ENCODE measurements at regions of chr11 and their contacts with region 1.

Region 1: DNA sequence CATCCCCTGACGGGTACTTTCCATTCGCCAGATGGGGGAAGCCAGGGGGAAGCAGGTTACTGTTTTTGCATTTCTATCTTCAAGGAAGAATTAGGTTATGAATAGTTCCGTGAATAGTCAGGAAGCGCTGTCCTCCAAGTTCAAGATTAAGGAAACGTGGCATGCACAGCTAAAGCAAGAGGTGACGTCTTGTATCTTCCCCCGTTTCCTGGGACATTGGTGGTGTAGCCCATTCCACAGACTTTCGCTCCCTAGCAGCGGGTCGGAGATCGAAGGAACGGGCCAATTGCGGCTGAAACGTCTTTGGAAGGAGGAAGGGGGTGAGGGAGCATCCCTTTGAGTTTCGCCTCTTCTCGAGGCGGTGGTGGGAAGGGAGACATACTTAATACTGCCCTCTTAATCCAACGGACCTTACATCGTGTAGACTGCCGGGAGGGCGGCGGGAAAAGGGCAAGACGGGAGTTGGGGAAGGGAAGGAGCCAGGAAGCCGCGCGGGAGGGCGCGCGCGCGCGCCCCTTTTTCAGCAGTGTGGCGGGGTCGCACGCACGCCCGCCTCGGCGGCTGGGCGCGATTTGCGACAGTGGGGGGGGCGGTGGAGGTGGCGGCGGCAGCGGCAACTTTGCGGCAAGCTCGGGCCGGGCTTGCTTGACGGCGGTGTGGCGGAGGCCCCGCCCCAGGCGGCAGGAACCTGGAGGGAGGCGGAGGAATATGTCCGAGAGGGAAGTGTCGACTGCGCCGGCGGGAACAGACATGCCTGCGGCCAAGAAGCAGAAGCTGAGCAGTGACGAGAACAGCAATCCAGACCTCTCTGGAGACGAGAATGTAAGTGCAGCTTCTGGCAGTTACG is at the start of gene EED:
- DNase-seq: peak; percentile 88 to 97 (median 94)
- ATAC-seq: peak; percentile 85
- H3K4me3 ChIP-seq: peak within 1 kb of the TSS; percentile 100
- H3K4me3 Mint-ChIP-seq: no peak within 1 kb of the TSS
- H3K27ac ChIP-seq: peak within 1 kb of the TSS; percentile 97 to 99
- H3K27ac Mint-ChIP-seq: no peak within 1 kb of the TSS
- H3K4me1 ChIP-seq: peaks cover 25% of the 10 kb centered on the region
- H3K4me1 Mint-ChIP-seq: peaks cover 27% of the 10 kb centered on the region
- H3K27me3 ChIP-seq: no peaks in the 10 kb centered on the region
- H3K27me3 Mint-ChIP-seq: no peaks in the 10 kb centered on the region
- CTCF ChIP-seq: no peak
- total RNA-seq, gene EED: 23.5 to 24.7 TPM

Region 2: DNA sequence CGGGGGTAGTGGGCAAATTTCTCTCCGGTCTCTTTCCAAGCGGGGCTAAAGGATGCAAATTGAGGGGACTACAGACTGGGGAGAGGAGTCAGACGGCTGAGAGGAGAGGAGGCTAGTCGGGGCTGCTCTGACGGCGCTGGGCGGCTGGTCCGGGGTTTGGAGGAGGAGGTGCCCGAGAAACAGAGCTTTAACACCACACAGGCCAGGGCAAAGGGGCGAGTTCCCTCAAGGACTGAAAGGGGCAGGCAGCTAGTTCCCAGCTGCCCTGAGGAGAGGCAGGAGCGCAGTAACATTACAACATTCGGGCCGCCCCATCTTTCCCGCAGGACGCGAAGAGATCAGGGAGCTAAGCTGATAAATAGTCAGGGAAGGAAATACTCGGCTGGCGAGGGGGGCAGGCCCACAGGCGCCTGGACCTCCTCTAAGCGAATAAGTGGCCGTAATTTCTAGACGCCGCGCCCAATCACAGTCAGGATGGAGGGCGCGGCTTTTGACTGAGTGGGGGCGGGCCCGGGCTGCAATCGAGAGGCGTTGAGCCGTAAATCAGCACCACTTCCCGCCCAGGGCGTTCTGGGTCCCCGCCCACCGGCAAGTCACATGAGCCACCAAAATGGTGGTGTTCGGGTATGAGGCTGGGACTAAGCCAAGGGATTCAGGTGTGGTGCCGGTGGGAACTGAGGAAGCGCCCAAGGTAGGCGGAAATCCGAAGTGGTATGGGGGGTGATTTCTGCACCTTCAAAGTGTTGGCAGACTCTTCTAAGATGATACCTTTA is 616.6 kb before region 1 on chr11 and contains the start of gene TMEM126B:
- CTCF ChIA-PET with region 1: no interaction called
- POLR2A ChIA-PET with region 1: interaction called, 6 read pairs
- intact Hi-C with region 1: loop called in 1 of 2 experiments (anchors 1 kb)
- DNase-seq: peak; percentile 89 to 97 (median 96)
- ATAC-seq: peak; percentile 97
- H3K4me3 ChIP-seq: peak within 1 kb of the TSS; percentile 80 to 91
- H3K4me3 Mint-ChIP-seq: peak within 1 kb of the TSS; percentile 91
- H3K27ac ChIP-seq: peak within 1 kb of the TSS; percentile 76 to 83
- H3K27ac Mint-ChIP-seq: peak within 1 kb of the TSS; percentile 96
- H3K4me1 ChIP-seq: peaks cover 14% of the 10 kb centered on the region
- H3K4me1 Mint-ChIP-seq: peaks cover 51% of the 10 kb centered on the region
- H3K27me3 ChIP-seq: peaks cover 0 to 1% of the 10 kb centered on the region in 2 experiments
- H3K27me3 Mint-ChIP-seq: no peaks in the 10 kb centered on the region
- CTCF ChIP-seq: no peak
- total RNA-seq, gene TMEM126B: 16.2 to 19.9 TPM

Region 3: GRCh38 chr11:85647604-85648299 is 597.0 kb before region 1 on chr11 and contains the start of gene TMEM126A:
- CTCF ChIA-PET with region 1: no interaction called
- POLR2A ChIA-PET with region 1: interaction called, 5 read pairs
- intact Hi-C with region 1: loop called (anchors 1 to 5 kb)
- DNase-seq: peak; percentile 77 to 94 (median 90)
- ATAC-seq: peak; percentile 98
- H3K4me3 ChIP-seq: peak within 1 kb of the TSS; percentile 82 to 92
- H3K4me3 Mint-ChIP-seq: peak within 1 kb of the TSS; percentile 92
- H3K27ac ChIP-seq: peak within 1 kb of the TSS; percentile 75 to 90
- H3K27ac Mint-ChIP-seq: peak within 1 kb of the TSS; percentile 96
- H3K4me1 ChIP-seq: peaks cover 18% of the 10 kb centered on the region
- H3K4me1 Mint-ChIP-seq: peaks cover 39% of the 10 kb centered on the region
- H3K27me3 ChIP-seq: no peaks in the 10 kb centered on the region
- H3K27me3 Mint-ChIP-seq: peaks cover 17% of the 10 kb centered on the region
- CTCF ChIP-seq: no peak
- total RNA-seq, gene TMEM126A: 23.3 to 26.8 TPM

Region 4: DNA sequence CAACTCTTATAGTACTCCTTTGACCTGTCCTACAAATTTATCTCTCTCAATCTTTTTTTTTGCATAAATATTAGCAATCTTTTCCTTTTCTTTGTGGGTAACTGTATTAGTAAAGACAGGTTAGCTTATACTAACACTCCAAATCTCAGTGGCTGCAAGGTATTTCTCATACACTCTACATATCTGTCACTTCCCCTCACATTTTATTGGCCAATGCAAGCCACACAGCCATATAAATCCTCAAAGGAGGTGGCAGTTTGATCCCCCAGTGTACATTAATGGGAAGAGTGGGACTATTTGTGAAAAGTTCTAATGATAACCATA is 42.8 kb before region 1 on chr11:
- CTCF ChIA-PET with region 1: no interaction called
- POLR2A ChIA-PET with region 1: no interaction called
- intact Hi-C with region 1: loop called in 1 of 2 experiments (anchors 2 kb)
- DNase-seq: peak in 2 of 9 experiments; percentile 8 to 41
- ATAC-seq: peak; percentile 64
- H3K4me3 ChIP-seq: peak overlapping the region; percentile 26 to 46
- H3K4me3 Mint-ChIP-seq: no peak overlapping the region
- H3K27ac ChIP-seq: peak overlapping the region in 1 of 2 experiments; percentile 22
- H3K27ac Mint-ChIP-seq: no peak overlapping the region
- H3K4me1 ChIP-seq: peaks cover 5% of the 10 kb centered on the region
- H3K4me1 Mint-ChIP-seq: no peaks in the 10 kb centered on the region
- H3K27me3 ChIP-seq: no peaks in the 10 kb centered on the region
- H3K27me3 Mint-ChIP-seq: no peaks in the 10 kb centered on the region
- CTCF ChIP-seq: no peak

Region 5: DNA sequence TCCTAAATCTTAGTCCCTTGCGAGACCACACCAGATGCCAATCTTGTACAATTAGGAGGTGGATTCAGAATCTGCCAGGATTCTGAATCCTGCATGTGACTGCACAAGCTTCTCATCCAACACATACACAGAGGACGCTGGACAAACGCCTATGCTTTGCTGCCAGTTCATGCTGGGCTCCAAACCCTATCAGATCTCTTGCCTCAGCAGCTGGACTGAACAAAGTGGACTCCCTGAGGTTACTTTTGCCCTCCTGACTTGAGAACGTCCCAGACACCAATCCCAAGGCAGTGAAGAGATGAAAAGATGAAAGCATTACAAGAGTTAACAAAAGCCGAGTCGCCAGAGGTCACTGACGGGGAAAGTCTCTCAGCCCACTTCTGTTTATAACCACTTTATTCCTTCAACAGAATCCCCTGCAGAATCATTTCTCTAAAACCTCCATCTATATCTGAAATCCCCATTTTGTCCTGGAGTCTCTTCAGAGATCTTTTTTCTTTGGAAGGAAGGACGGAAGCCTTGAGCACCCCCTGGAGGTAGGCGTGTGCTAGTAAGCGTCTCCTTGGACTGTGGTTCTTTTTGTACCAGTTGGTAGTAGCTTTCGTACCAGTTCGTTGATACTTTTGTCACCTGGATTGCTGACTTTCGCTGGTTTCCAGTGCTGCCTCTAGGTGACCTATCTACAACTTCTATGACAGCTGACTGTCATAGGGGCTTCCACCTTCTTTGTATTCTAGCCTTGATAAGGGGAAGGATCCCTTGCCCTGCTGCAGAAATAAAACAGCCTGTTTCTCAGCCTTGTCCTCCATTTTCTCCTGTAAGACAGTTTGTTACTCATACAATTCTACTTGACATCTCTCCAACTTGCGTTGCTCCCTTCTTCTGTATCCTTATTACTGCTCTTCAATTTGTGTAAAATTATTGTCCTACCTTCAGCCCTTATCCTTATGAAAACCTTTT is 26.3 kb before region 1 on chr11:
- CTCF ChIA-PET with region 1: interaction called, 10 read pairs
- POLR2A ChIA-PET with region 1: no interaction called
- intact Hi-C with region 1: no loop called
- DNase-seq: peak; percentile 17 to 81 (median 59)
- ATAC-seq: peak; percentile 93
- H3K4me3 ChIP-seq: peak overlapping the region in 1 of 2 experiments; percentile 38
- H3K4me3 Mint-ChIP-seq: peak overlapping the region; percentile 61
- H3K27ac ChIP-seq: no peak overlapping the region
- H3K27ac Mint-ChIP-seq: no peak overlapping the region
- H3K4me1 ChIP-seq: no peaks in the 10 kb centered on the region
- H3K4me1 Mint-ChIP-seq: peaks cover 2% of the 10 kb centered on the region
- H3K27me3 ChIP-seq: no peaks in the 10 kb centered on the region
- H3K27me3 Mint-ChIP-seq: peaks cover 7% of the 10 kb centered on the region
- CTCF ChIP-seq: peak; percentile 74

Region 6: GRCh38 chr11:86302100-86302793 is 57.5 kb after region 1 on chr11 and contains the start of gene HIKESHI:
- CTCF ChIA-PET with region 1: interaction called, 3 read pairs
- POLR2A ChIA-PET with region 1: interaction called, 4 read pairs
- intact Hi-C with region 1: loop called (anchors 1 kb)
- DNase-seq: peak; percentile 74 to 96 (median 93)
- ATAC-seq: peak; percentile 98
- H3K4me3 ChIP-seq: peak within 1 kb of the TSS; percentile 73 to 86
- H3K4me3 Mint-ChIP-seq: peak within 1 kb of the TSS; percentile 99
- H3K27ac ChIP-seq: peak within 1 kb of the TSS; percentile 74 to 76
- H3K27ac Mint-ChIP-seq: peak within 1 kb of the TSS; percentile 99
- H3K4me1 ChIP-seq: peaks cover 22% of the 10 kb centered on the region
- H3K4me1 Mint-ChIP-seq: peaks cover 29% of the 10 kb centered on the region
- H3K27me3 ChIP-seq: no peaks in the 10 kb centered on the region
- H3K27me3 Mint-ChIP-seq: no peaks in the 10 kb centered on the region
- CTCF ChIP-seq: no peak
- total RNA-seq, gene HIKESHI: 4.9 to 6.9 TPM

Region 7: DNA sequence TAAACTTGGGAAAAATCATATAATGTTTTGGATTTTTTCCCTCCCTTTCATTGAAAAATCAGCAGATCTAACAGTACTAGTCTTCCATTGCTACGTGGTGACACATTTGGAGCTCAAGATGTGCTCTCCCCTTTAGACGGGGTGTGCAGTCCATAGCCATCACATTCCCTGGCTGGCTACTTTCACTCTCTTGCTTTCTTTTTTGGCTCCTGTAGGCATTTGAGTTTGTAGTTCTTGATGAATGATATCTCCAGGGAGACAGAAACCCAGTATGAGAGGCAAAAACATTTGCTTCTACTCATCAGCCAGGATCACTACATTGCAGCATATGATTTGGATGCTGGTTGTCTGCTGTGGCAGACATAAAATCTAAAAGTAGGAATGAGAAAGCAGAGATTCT is 142.0 kb after region 1 on chr11:
- CTCF ChIA-PET with region 1: no interaction called
- POLR2A ChIA-PET with region 1: no interaction called
- intact Hi-C with region 1: no loop called
- DNase-seq: no peak
- ATAC-seq: no peak
- H3K4me3 ChIP-seq: no peak overlapping the region
- H3K4me3 Mint-ChIP-seq: no peak overlapping the region
- H3K27ac ChIP-seq: no peak overlapping the region
- H3K27ac Mint-ChIP-seq: no peak overlapping the region
- H3K4me1 ChIP-seq: no peaks in the 10 kb centered on the region
- H3K4me1 Mint-ChIP-seq: no peaks in the 10 kb centered on the region
- H3K27me3 ChIP-seq: no peaks in the 10 kb centered on the region
- H3K27me3 Mint-ChIP-seq: no peaks in the 10 kb centered on the region
- CTCF ChIP-seq: no peak